Activated B cell treated with CpG ODN at 0.5 μM for 24 hours (primary cell): ENCODE measurements at regions of chr12 and their contacts with region 1.

Region 1: DNA sequence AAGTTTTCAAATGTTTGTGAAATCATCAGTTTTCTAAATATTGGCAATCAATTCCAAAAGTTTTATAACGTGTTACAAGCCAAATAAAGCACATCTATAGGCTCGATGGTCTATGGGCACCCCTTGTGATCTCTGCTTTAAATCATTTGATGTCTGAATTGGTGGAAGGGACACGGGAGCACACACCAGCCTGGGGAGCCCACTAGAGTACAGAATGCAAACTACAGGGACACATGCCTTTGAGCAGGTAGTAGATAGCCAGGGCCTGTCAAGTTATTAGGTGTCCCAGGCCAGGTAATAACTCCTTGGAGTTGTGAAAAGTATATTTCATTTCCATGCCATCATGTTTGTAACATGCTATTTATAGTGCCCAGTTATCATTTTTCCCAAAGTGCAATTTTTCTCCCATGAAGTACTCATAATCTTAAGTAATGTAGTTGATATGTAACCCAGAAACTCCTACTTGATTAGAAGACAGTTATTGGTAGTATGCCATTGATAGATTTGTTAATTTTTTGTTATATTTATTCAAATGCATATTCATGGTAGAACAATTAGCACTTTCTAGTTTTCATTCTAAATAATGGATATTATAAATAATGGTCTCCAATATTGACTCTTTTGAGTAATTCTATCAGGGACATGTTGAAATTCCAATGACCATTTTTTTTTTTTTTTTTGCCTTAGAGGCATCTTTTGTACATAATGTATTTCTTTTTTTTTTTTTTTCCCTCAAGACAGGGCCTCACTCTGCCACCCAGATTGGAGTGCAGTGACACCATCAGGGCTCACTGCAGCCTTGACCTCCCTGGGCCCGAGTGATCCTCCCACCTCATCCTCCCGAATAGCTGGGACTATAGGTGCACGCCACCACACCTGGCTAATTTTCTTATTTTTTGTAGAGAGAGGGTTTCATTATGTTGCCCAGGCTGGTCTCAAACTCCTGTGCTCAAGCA is 96.9 kb upstream of the FGD4 start:
- DNase-seq: peak; percentile 21
- ATAC-seq: peak; percentile 99
- H3K4me3 Mint-ChIP-seq: peak overlapping the region; percentile 74
- H3K27ac Mint-ChIP-seq: peak overlapping the region; percentile 78
- H3K4me1 Mint-ChIP-seq: peaks cover 31% of the 10 kb centered on the region
- H3K27me3 Mint-ChIP-seq: no peaks in the 10 kb centered on the region
- CTCF ChIP-seq: no peak

Region 2: DNA sequence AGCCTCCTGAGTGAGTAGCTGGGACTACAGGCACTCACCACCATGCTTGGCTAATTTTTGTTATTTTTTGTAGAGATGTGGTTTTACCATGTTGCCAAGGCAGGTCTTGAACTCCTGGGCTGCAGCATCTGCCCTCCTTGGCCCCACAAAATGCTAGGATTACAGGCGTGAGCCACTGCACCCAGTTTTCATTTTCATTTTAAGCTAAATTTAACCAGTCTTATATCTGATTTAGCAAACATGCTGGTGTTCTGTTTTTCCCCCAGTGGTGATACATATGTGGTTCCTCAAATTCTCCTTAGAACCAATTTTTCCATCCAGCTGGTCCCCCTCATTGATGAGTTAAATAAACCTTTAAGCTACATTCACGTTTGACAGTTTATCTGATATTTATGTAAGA is 239.6 kb before region 1 on chr12:
- CTCF ChIA-PET with region 1: interaction called, 5 read pairs
- POLR2A ChIA-PET with region 1: no interaction called
- intact Hi-C with region 1: loop called (anchors 1 kb)
- DNase-seq: no peak
- ATAC-seq: no peak
- H3K4me3 Mint-ChIP-seq: no peak overlapping the region
- H3K27ac Mint-ChIP-seq: no peak overlapping the region
- H3K4me1 Mint-ChIP-seq: peaks cover 14% of the 10 kb centered on the region
- H3K27me3 Mint-ChIP-seq: no peaks in the 10 kb centered on the region
- CTCF ChIP-seq: no peak

Region 3: GRCh38 chr12:32106517-32107358 is 195.8 kb before region 1 on chr12 and contains the start of gene BICD1:
- CTCF ChIA-PET with region 1: no interaction called
- POLR2A ChIA-PET with region 1: interaction called, 9 read pairs
- intact Hi-C with region 1: loop called (anchors 1 kb)
- DNase-seq: peak; percentile 69
- ATAC-seq: peak; percentile 78
- H3K4me3 Mint-ChIP-seq: peak within 1 kb of the TSS; percentile 95
- H3K27ac Mint-ChIP-seq: peak within 1 kb of the TSS; percentile 95
- H3K4me1 Mint-ChIP-seq: peaks cover 28% of the 10 kb centered on the region
- H3K27me3 Mint-ChIP-seq: no peaks in the 10 kb centered on the region
- CTCF ChIP-seq: no peak
- total RNA-seq, gene BICD1: 55.5 and 67.6 TPM in 2 replicates

Region 4: DNA sequence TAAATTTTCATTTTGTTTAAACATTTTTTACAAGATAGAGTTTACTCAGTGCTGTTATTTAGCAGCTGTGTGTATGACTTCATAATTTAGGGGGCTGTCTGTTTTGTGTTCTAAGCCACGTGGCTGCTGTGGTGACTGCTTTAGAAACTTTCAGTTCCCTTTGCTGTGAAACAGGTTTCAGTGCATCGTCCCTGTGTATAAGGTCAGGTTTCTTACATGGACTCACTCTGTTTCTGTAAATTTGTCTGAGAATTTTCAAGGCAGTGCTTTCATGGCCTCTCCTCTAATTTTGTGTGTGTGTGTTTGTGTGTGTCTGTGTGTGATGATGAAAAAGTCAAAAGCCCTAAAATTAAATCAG is 163.5 kb before region 1 on chr12:
- CTCF ChIA-PET with region 1: no interaction called
- POLR2A ChIA-PET with region 1: interaction called, 6 read pairs
- intact Hi-C with region 1: loop called (anchors 1 kb)
- DNase-seq: peak; percentile 27
- ATAC-seq: peak; percentile 83
- H3K4me3 Mint-ChIP-seq: peak overlapping the region; percentile 79
- H3K27ac Mint-ChIP-seq: peak overlapping the region; percentile 96
- H3K4me1 Mint-ChIP-seq: peaks cover 74% of the 10 kb centered on the region
- H3K27me3 Mint-ChIP-seq: no peaks in the 10 kb centered on the region
- CTCF ChIP-seq: no peak

Region 5: DNA sequence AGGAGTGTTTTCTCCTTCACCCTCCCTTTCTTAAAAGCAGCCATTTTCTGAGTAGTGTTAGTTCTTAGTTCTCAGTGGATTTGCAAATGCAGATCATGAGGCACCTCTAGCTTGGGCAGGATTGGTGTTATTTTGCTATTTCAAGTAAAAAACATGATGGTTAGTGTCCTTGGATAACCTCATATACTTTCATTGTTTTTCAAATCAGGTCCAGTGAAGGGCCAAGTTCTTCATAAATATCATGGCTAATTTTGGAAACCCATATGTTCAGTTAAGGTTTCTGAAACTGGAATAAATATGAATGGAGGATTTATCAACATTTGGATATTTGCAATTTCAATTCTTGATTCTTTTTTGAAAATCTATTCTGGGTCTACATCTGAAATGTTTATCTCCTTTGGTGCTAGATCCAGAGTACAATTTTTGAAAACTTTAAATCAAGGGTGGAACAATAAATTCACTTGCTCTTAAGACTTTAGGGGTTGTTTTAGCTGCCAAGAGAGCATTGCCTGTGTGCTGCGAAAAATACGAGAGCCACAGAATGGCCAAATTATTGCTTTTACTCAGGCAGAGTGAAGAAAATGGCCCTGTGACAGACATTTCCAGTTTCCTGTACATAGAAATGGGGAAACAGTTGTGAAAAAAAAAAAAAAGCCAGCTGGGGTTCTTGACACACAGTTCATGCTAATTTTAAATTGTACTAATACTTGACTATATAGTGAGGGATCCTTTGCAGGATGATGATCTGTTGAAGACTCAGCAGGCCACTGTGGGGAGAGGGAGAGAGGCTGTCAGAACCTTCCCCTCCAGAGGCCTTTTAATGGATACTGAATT is 91.2 kb before region 1 on chr12:
- CTCF ChIA-PET with region 1: no interaction called
- POLR2A ChIA-PET with region 1: no interaction called
- intact Hi-C with region 1: loop called (anchors 5 kb)
- DNase-seq: no peak
- ATAC-seq: no peak
- H3K4me3 Mint-ChIP-seq: no peak overlapping the region
- H3K27ac Mint-ChIP-seq: no peak overlapping the region
- H3K4me1 Mint-ChIP-seq: peaks cover 29% of the 10 kb centered on the region
- H3K27me3 Mint-ChIP-seq: no peaks in the 10 kb centered on the region
- CTCF ChIP-seq: no peak

Region 6: DNA sequence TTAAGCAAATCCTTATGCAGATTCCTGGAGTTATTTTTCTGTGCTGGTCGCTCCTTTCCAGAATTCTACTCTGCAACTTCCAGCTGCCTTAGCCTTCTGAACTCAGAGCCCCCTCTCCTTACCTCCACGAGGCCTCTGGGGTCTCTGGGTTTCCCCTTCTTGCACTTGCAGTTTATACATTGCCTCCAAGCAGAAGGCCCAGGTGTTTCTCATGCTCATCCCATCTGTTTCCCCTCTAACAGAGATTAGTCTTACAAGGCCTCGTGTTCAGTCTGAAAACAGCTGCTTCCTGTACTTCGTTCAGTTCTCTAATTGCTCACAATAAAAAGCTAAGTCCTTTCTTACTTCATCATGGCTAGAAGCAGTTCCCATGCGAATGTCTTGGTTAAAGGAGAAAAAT is 37.5 kb before region 1 on chr12:
- CTCF ChIA-PET with region 1: interaction called, 5 read pairs
- POLR2A ChIA-PET with region 1: interaction called, 6 read pairs
- intact Hi-C with region 1: loop called (anchors 2 kb)
- DNase-seq: peak; percentile 31
- ATAC-seq: peak; percentile 67
- H3K4me3 Mint-ChIP-seq: peak overlapping the region; percentile 52
- H3K27ac Mint-ChIP-seq: peak overlapping the region; percentile 97
- H3K4me1 Mint-ChIP-seq: peaks cover 43% of the 10 kb centered on the region
- H3K27me3 Mint-ChIP-seq: no peaks in the 10 kb centered on the region
- CTCF ChIP-seq: no peak

Region 7: DNA sequence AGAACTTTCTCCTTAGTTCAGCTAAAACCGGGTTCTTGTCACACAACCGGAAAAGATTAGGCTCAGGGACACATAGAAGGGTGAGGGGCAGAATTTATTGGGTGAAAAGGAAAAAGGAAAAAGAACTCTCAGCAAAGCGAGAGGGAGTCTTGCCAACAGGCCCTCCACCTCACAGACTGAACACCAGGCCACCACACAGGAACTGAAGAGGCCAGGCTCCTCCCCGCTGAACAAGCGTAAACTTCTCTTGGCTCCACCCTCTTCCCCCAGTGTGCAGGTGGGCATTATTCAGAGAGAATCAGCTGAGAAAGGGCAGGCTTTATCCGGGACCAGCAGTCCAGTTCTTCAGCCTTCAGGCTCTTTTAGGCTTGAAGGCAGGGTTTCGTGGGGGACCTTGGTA is 28.8 kb before region 1 on chr12:
- CTCF ChIA-PET with region 1: no interaction called
- POLR2A ChIA-PET with region 1: interaction called, 6 read pairs
- intact Hi-C with region 1: loop called (anchors 1 kb)
- DNase-seq: peak; percentile 47
- ATAC-seq: peak; percentile 96
- H3K4me3 Mint-ChIP-seq: peak overlapping the region; percentile 77
- H3K27ac Mint-ChIP-seq: peak overlapping the region; percentile 99
- H3K4me1 Mint-ChIP-seq: peaks cover 39% of the 10 kb centered on the region
- H3K27me3 Mint-ChIP-seq: no peaks in the 10 kb centered on the region
- CTCF ChIP-seq: no peak